B cell (primary cell): ENCODE measurements at regions of chr12 and their contacts with region 1.

Region 1: GRCh38 chr12:11746024-11746771 is 96.7 kb downstream of the ETV6 start:
- DNase-seq: peak; percentile 84
- ATAC-seq: peak; percentile 67
- H3K4me3 ChIP-seq: peak overlapping the region in 2 of 5 experiments; percentile 3 to 13
- H3K4me3 Mint-ChIP-seq: peak overlapping the region; percentile 68
- H3K27ac ChIP-seq: peak overlapping the region; percentile 19 to 71
- H3K27ac Mint-ChIP-seq: peak overlapping the region; percentile 89
- H3K4me1 ChIP-seq: peaks cover 65 to 80% of the 10 kb centered on the region in 2 donors
- H3K4me1 Mint-ChIP-seq: peaks cover 83% of the 10 kb centered on the region
- H3K27me3 ChIP-seq: no peaks in the 10 kb centered on the region
- H3K27me3 Mint-ChIP-seq: no peaks in the 10 kb centered on the region
- CTCF ChIP-seq: no peak

Region 2: DNA sequence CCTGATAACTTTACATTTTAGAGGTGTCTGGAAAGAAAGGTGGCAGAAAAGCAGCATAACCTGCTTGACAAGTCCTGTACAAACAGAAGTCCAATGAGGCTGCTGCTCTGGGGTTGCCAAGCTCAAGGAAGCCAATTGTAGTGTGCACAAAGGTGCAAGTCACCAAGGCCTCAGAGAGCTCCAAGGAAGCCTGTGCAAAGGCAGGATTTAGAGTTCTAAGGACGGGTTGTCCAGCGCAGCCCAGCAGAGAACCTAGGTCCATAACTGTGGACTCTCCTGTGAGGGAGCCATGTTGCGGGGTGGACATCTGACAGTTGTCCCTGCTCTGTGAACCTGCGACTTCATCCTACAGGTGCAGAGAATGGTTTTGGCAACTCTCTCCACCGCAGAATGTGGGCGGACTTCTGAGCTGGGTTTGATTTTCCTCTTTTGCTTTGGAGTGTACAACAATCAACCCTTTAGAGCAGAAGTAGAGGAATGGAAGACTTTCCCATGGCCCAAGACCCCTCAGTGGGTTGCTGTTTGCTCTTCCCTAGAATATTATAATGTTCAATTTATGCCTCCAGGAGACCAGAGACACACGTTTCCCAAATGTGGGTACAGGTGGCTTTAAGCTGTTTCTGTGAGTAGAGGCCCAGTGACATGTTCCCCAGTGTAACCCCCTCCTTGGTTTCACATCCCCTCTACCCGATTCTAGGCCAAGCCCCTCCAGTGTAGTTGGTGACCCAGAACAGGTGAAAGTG is 15.7 kb before region 1 on chr12:
- CTCF ChIA-PET with region 1: interaction called, 31 read pairs
- POLR2A ChIA-PET with region 1: interaction called, 19 read pairs
- intact Hi-C with region 1: loop called (anchors 1 kb)
- DNase-seq: peak; percentile 83
- ATAC-seq: peak; percentile 80
- H3K4me3 ChIP-seq: no peak overlapping the region
- H3K4me3 Mint-ChIP-seq: peak overlapping the region; percentile 79
- H3K27ac ChIP-seq: peak overlapping the region; percentile 69 to 76
- H3K27ac Mint-ChIP-seq: peak overlapping the region; percentile 94
- H3K4me1 ChIP-seq: peaks cover 82 to 94% of the 10 kb centered on the region in 2 donors
- H3K4me1 Mint-ChIP-seq: peaks cover 92% of the 10 kb centered on the region
- H3K27me3 ChIP-seq: no peaks in the 10 kb centered on the region
- H3K27me3 Mint-ChIP-seq: no peaks in the 10 kb centered on the region
- CTCF ChIP-seq: no peak

Region 3: DNA sequence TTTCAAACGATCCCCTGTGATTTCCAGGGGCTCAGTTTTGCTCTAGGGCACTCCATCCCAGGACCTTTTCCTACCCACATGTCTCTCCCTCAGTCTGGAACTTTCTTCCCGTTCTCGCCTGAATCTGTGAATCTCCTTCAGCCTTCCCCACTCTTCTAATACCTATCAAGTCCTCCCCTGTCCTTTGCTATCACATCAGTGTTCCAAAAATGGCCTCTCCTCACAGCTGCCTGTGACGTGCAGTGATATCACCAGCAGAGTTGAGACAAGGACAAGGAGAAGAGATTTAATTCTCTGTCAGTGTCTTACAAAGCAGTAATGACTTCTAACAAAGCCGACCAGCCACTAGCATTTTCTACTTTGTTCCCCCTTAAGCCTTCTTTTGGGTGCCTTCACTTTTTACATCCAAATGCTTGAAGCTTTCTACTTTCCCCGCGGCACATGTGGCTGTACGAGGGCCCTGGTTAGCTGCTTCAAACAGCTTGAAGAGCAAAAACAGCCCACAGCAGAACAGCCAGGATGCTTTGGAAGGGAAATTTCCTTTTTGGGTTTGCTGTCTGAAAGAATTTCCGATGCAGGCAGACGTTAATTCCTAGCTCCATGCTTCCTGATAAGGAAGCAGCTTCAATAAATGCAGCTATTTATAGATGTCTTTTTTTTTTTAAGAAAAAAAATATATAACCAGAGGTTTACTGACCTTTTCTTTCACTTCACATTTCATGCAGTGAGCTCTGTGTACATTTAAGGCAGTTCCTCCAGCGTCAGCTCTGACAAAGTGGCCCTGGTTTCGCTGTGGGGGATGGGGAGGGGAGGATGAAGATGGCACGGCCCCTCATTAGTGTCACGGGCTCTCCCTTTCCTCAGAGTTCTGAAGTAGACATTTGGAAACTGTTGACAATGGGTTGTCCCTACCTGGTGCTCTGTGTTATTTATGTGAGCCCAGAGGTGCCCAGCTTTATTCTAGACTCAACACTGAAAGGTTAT is 12.6 kb after region 1 on chr12:
- CTCF ChIA-PET with region 1: interaction called, 18 read pairs
- POLR2A ChIA-PET with region 1: interaction called, 9 read pairs
- intact Hi-C with region 1: loop called (anchors 1 kb)
- DNase-seq: peak; percentile 73
- ATAC-seq: peak; percentile 78
- H3K4me3 ChIP-seq: peak overlapping the region in 2 of 5 experiments; percentile 18 to 28
- H3K4me3 Mint-ChIP-seq: peak overlapping the region; percentile 74
- H3K27ac ChIP-seq: peak overlapping the region; percentile 68 to 81
- H3K27ac Mint-ChIP-seq: peak overlapping the region; percentile 97
- H3K4me1 ChIP-seq: peaks cover 49 to 56% of the 10 kb centered on the region in 2 donors
- H3K4me1 Mint-ChIP-seq: peaks cover 67% of the 10 kb centered on the region
- H3K27me3 ChIP-seq: no peaks in the 10 kb centered on the region
- H3K27me3 Mint-ChIP-seq: no peaks in the 10 kb centered on the region
- CTCF ChIP-seq: no peak